Activated B cell treated with CpG ODN at 0.5 μM for 24 hours (primary cell): ENCODE measurements at regions of chr5 and their contacts with region 1.

Region 1: DNA sequence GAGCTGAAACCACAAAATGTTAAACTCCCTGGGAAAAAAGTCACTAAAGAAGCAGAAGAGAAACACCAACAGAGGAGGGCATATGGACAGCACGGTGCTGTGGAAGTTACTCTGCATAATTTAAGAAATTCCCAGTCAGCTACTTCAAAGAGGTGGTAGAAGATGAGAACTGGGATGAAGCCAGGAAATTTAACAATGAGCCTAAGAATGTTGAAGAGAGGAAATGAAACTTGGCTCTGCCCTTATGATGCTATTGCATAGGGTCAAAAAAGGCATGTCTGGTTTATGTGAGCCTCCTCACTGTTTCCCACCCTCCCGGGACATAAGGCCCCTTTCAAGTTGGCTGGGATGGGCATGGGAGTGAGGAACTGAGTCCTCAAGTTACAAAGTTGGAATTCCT is 25.4 kb upstream of the SNX18 start:
- DNase-seq: no peak
- ATAC-seq: no peak
- H3K4me3 Mint-ChIP-seq: no peak overlapping the region
- H3K27ac Mint-ChIP-seq: no peak overlapping the region
- H3K4me1 Mint-ChIP-seq: no peaks in the 10 kb centered on the region
- H3K27me3 Mint-ChIP-seq: peaks cover 9% of the 10 kb centered on the region
- CTCF ChIP-seq: no peak

Region 2: DNA sequence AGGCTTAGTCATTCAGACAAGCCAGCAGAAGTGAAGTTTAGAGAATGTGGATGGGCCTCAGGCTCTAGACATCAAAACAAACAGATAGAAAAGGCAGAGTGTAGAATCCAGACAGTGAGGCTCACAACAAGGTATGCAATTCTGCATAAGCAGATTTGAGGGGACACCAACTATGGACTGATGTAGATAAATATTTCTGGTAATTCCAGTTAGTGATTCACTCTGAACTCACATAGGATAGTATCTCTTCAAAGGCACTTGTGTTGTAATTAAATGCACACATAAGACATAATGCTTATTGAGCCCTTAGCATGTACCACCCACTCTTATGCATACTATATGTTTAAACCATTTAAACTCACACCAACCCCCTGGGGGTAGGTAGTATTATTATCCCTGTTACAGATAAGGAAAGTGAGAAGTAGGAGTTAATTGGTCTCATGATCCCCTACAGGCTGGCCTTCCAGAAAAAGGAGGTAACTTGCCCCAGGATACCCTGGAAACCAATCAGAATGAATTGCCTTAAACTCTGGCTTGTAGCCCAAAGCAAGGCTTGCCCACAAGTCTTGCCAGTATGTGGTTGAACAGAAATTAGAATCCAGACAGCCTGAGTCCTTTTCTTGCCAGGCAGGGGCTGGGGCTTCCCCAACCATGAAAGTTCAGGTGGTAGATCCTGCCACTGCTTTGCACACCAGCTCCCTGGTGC is 76.1 kb before region 1 on chr5:
- CTCF ChIA-PET with region 1: interaction called, 8 read pairs
- POLR2A ChIA-PET with region 1: no interaction called
- intact Hi-C with region 1: loop called (anchors 1 kb)
- DNase-seq: no peak
- ATAC-seq: no peak
- H3K4me3 Mint-ChIP-seq: no peak overlapping the region
- H3K27ac Mint-ChIP-seq: no peak overlapping the region
- H3K4me1 Mint-ChIP-seq: no peaks in the 10 kb centered on the region
- H3K27me3 Mint-ChIP-seq: peaks cover 16% of the 10 kb centered on the region
- CTCF ChIP-seq: no peak